ENCODE measurements at regions of chr6 and their contacts with region 1.

Region 1: GRCh38 chr6:41200296-41200900 is 551 bp downstream of the TREML2 start:
- DNase-seq: peak; percentile 78
- H3K4me3 Mint-ChIP-seq: peak overlapping the region; percentile 69
- H3K27ac Mint-ChIP-seq: peak overlapping the region; percentile 95
- H3K4me1 Mint-ChIP-seq: peaks cover 47% of the 10 kb centered on the region
- H3K27me3 Mint-ChIP-seq: no peaks in the 10 kb centered on the region

Region 2: GRCh38 chr6:41072676-41073623 is 127.4 kb before region 1 on chr6 and contains the start of gene NFYA:
- CTCF ChIA-PET with region 1: interaction called, 3 read pairs
- POLR2A ChIA-PET with region 1: interaction called, 4 read pairs
- intact Hi-C with region 1: loop called (anchors 1 kb)
- DNase-seq: peak; percentile 100
- H3K4me3 Mint-ChIP-seq: peak within 1 kb of the TSS; percentile 93
- H3K27ac Mint-ChIP-seq: peak within 1 kb of the TSS; percentile 98
- H3K4me1 Mint-ChIP-seq: peaks cover 52% of the 10 kb centered on the region
- H3K27me3 Mint-ChIP-seq: no peaks in the 10 kb centered on the region
- total RNA-seq, gene NFYA: 30.2 to 30.4 TPM

Region 3: GRCh38 chr6:41100871-41101287 is 99.5 kb before region 1 on chr6:
- CTCF ChIA-PET with region 1: interaction called, 3 read pairs
- POLR2A ChIA-PET with region 1: no interaction called
- intact Hi-C with region 1: loop called (anchors 2 kb)
- DNase-seq: no peak
- H3K4me3 Mint-ChIP-seq: no peak overlapping the region
- H3K27ac Mint-ChIP-seq: no peak overlapping the region
- H3K4me1 Mint-ChIP-seq: no peaks in the 10 kb centered on the region
- H3K27me3 Mint-ChIP-seq: no peaks in the 10 kb centered on the region

Region 4: DNA sequence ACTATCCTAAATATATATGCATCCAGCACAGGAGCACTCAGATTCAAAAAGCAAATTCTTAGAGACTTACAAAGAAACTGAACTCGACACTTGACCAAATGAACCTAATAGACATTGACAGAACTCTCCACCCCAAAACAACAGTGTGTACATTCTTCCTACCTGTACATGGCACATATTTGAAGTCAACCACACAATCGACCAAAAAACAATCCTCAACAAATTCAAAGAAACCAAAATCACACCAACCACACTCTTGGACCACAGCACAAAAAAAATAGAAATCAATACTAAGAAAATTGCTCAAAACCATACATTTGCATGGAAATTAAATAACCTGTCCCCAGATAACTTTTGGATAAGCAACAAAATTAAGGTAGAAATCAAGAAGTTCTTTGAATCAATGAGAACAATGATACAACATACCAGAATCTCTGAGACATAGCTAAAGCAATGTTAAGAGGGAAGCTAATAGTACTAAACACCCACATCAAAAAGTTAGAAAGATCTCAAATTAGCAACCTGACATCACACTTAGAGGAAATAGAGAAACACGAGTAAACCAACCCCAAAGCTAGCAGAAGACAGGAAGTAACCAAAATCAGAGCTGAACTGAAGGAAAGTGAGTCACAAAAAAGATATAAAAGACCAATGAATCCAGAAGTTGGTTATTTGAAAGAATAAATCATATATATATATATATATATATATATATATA is 98.5 kb after region 1 on chr6:
- CTCF ChIA-PET with region 1: no interaction called
- POLR2A ChIA-PET with region 1: no interaction called
- intact Hi-C with region 1: loop called (anchors 5 kb)
- DNase-seq: no peak
- H3K4me3 Mint-ChIP-seq: no peak overlapping the region
- H3K27ac Mint-ChIP-seq: peak overlapping the region; percentile 15
- H3K4me1 Mint-ChIP-seq: peaks cover 27% of the 10 kb centered on the region
- H3K27me3 Mint-ChIP-seq: no peaks in the 10 kb centered on the region

Region 5: GRCh38 chr6:42224222-42224989 is 1024.0 kb after region 1 on chr6:
- CTCF ChIA-PET with region 1: no interaction called
- POLR2A ChIA-PET with region 1: no interaction called
- intact Hi-C with region 1: no loop called
- DNase-seq: peak; percentile 33
- H3K4me3 Mint-ChIP-seq: peak overlapping the region; percentile 54
- H3K27ac Mint-ChIP-seq: peak overlapping the region; percentile 80
- H3K4me1 Mint-ChIP-seq: peaks cover 21% of the 10 kb centered on the region
- H3K27me3 Mint-ChIP-seq: no peaks in the 10 kb centered on the region